ENCODE measurements at regions of chr9 and their contacts with region 1.

Region 1: DNA sequence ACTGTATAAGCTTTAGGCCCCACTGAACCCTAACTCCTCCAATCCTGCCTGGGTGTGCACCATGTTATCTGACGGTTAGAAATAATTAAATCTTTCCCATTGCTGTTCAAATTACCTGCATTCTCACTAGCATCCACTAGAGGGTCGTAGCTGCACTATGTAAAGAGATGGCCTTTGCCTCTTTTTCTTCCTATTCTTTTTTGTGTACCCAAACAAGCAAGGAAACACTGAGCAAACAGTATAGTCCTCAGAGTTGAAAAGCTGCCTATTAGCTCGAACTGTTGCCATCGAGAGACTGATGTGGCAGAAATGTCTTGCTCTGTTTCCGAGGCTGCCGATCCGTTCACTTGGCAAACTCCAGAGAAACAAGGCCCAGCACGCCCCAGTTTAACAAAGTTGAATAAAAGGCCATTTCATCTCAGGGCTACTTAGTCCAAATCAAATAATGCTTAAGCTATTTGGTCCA is 163.8 kb upstream of the TRPM3 start:
- DNase-seq: peak; percentile 74
- H3K4me3 Mint-ChIP-seq: no peak overlapping the region
- H3K27ac Mint-ChIP-seq: no peak overlapping the region
- H3K4me1 Mint-ChIP-seq: peaks cover 5% of the 10 kb centered on the region
- H3K27me3 Mint-ChIP-seq: peaks cover 32% of the 10 kb centered on the region
- CTCF ChIP-seq: peak; percentile 78

Region 2: DNA sequence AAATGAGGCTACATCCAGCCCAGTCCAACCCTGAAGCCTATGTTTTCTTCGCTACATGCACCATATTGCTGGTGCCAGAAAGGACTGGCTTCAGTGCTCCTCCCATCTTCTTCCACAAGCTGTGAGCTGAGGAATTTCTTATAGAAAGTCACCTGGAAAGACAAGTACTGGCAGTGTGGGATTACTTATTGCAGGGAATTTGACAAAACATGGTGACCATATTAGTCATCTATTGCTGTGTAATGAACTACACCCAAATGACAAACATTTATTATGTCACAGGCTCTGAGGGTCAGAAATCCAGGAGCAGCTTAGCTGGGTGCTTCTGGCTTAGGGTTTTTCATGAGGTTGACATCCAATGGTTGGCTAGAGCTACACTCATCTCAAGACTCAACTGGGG is 1884.8 kb before region 1 on chr9:
- CTCF ChIA-PET with region 1: no interaction called
- POLR2A ChIA-PET with region 1: no interaction called
- intact Hi-C with region 1: no loop called
- DNase-seq: no peak
- H3K4me3 Mint-ChIP-seq: no peak overlapping the region
- H3K27ac Mint-ChIP-seq: no peak overlapping the region
- H3K4me1 Mint-ChIP-seq: peaks cover 7% of the 10 kb centered on the region
- H3K27me3 Mint-ChIP-seq: peaks cover 18% of the 10 kb centered on the region
- CTCF ChIP-seq: no peak

Region 3: GRCh38 chr9:71249729-71250317 is 35.4 kb before region 1 on chr9:
- CTCF ChIA-PET with region 1: interaction called, 15 read pairs
- POLR2A ChIA-PET with region 1: no interaction called
- intact Hi-C with region 1: no loop called
- DNase-seq: peak; percentile 75
- H3K4me3 Mint-ChIP-seq: no peak overlapping the region
- H3K27ac Mint-ChIP-seq: no peak overlapping the region
- H3K4me1 Mint-ChIP-seq: peaks cover 5% of the 10 kb centered on the region
- H3K27me3 Mint-ChIP-seq: peaks cover 33% of the 10 kb centered on the region
- CTCF ChIP-seq: peak; percentile 87

Region 4: DNA sequence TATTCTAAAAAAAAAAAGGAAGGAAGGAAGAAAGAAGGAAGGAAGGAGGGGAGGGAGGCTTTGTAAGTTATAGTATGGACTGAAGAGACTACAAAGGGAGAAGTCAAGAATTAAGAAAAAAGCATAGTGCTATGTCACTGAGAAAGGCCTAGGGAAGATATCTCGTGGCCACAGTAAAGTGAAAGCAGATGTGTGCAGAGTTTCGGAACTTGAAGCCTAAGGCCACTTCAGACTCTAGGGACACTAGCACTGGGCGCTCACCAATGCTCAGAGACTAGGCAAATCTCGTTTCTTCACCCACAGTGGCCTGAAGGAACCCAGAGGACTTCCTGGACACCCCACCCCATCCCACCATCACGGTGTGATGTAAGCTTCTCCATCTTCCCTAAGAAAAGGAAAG is 17.6 kb after region 1 on chr9:
- CTCF ChIA-PET with region 1: interaction called, 25 read pairs
- POLR2A ChIA-PET with region 1: no interaction called
- intact Hi-C with region 1: no loop called
- DNase-seq: no peak
- H3K4me3 Mint-ChIP-seq: no peak overlapping the region
- H3K27ac Mint-ChIP-seq: no peak overlapping the region
- H3K4me1 Mint-ChIP-seq: no peaks in the 10 kb centered on the region
- H3K27me3 Mint-ChIP-seq: peaks cover 21% of the 10 kb centered on the region
- CTCF ChIP-seq: no peak

Region 5: DNA sequence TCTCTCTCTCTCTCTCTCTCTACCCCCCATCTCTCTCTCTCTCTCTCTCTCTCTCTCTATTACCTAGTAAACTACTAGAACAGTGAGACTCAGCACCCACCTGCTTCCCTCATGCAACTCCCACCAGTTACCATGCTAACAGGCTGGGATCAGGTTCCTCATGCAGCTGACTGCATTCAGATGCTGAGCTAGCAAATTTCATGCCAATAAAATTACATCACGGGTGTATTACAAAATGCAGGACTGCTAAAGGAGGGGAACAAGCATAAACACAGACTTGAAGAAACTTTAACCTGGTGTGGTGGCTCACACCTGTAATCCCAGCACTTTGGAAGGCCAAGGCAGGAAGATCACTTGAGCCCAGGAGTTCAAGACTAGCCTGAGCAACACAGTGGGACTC is 407.1 kb after region 1 on chr9:
- CTCF ChIA-PET with region 1: interaction called, 11 read pairs
- POLR2A ChIA-PET with region 1: no interaction called
- intact Hi-C with region 1: no loop called
- DNase-seq: peak; percentile 70
- H3K4me3 Mint-ChIP-seq: no peak overlapping the region
- H3K27ac Mint-ChIP-seq: no peak overlapping the region
- H3K4me1 Mint-ChIP-seq: peaks cover 13% of the 10 kb centered on the region
- H3K27me3 Mint-ChIP-seq: no peaks in the 10 kb centered on the region
- CTCF ChIP-seq: no peak

Region 6: GRCh38 chr9:71768388-71769174 is 483.4 kb after region 1 on chr9 and contains the start of gene CEMIP2:
- CTCF ChIA-PET with region 1: interaction called, 9 read pairs
- POLR2A ChIA-PET with region 1: no interaction called
- intact Hi-C with region 1: loop called (anchors 1 kb)
- DNase-seq: peak; percentile 93
- H3K4me3 Mint-ChIP-seq: peak within 1 kb of the TSS; percentile 92
- H3K27ac Mint-ChIP-seq: peak within 1 kb of the TSS; percentile 75
- H3K4me1 Mint-ChIP-seq: peaks cover 42% of the 10 kb centered on the region
- H3K27me3 Mint-ChIP-seq: no peaks in the 10 kb centered on the region
- CTCF ChIP-seq: peak; percentile 41
- total RNA-seq, gene CEMIP2: 13.7 and 17.7 TPM in 2 replicates

Region 7: GRCh38 chr9:71819115-71819739 is 534.0 kb after region 1 on chr9:
- CTCF ChIA-PET with region 1: interaction called, 62 read pairs
- POLR2A ChIA-PET with region 1: no interaction called
- intact Hi-C with region 1: loop called (anchors 1 kb)
- DNase-seq: peak; percentile 56
- H3K4me3 Mint-ChIP-seq: no peak overlapping the region
- H3K27ac Mint-ChIP-seq: no peak overlapping the region
- H3K4me1 Mint-ChIP-seq: no peaks in the 10 kb centered on the region
- H3K27me3 Mint-ChIP-seq: no peaks in the 10 kb centered on the region
- CTCF ChIP-seq: peak; percentile 62